Activated CD4-positive, alpha-beta memory T cell treated with anti-CD3 and anti-CD28 coated beads for 36 hours (primary cell): ENCODE measurements at regions of chr1 and their contacts with region 1.

Region 1: DNA sequence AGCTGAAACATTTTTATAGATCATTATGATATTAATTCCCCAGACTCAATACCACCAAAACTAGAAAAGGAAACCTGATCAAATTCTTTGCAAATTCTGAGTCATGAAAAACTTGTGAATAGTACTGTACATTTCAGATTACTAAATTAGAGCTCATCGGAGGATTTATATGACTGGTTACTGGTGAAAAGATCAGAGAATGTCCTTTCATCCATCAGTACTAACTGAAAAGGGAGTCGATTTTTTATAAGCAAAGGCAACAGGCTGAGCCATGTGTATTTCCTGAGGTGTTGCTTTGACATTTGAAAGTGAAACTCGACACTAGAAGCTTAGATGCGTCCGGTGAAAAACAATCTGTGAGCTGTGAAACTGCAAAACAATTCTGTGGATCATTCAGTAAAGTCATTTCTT is 155.7 kb downstream of the TNFSF18 start:
- DNase-seq: peak; percentile 29
- H3K4me3 Mint-ChIP-seq: peak overlapping the region; percentile 54
- H3K27ac Mint-ChIP-seq: peak overlapping the region; percentile 14
- H3K4me1 Mint-ChIP-seq: peaks cover 38% of the 10 kb centered on the region
- H3K27me3 Mint-ChIP-seq: peaks cover 18% of the 10 kb centered on the region

Region 2: DNA sequence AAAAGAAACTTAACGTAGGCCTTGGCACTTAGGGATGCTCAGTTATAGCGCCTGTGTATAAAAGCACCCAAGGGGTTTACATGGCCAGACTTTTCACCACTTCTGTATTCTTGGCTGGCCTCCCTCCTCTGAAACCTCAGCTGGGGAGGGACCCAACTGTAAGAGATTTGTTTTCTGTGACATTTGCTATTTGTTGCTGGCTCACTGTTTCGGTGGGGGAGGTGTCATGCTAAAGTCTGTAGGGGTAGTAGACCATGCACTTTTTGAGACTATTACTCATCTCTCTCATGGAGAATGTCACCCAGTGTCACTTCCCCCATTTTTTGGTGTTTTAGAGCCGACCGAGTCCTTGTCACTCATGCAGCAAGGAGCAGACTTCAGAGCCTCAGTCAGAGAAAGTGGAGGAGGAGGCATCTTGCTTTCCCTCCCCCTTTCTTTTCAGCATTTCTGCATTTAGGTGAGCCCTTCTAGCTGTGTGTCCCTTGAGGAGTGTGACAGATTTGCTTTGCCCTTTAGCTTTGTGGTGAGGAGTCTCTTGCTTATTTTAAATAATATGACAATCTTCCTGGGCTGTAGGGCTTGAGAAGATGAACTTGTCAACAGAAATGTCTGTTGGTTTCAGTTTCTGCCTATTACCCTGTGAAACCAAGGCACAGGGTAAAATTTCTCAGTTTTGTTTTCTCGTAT is 76.1 kb before region 1 on chr1:
- CTCF ChIA-PET with region 1: no interaction called
- POLR2A ChIA-PET with region 1: interaction called, 5 read pairs
- intact Hi-C with region 1: loop called (anchors 2 kb)
- DNase-seq: peak; percentile 69
- H3K4me3 Mint-ChIP-seq: peak overlapping the region; percentile 4
- H3K27ac Mint-ChIP-seq: peak overlapping the region; percentile 63
- H3K4me1 Mint-ChIP-seq: peaks cover 24% of the 10 kb centered on the region
- H3K27me3 Mint-ChIP-seq: peaks cover 11% of the 10 kb centered on the region

Region 3: GRCh38 chr1:172837816-172838680 is 57.0 kb before region 1 on chr1:
- CTCF ChIA-PET with region 1: interaction called, 6 read pairs
- POLR2A ChIA-PET with region 1: interaction called, 4 read pairs
- intact Hi-C with region 1: loop called (anchors 1 kb)
- DNase-seq: peak; percentile 15
- H3K4me3 Mint-ChIP-seq: no peak overlapping the region
- H3K27ac Mint-ChIP-seq: no peak overlapping the region
- H3K4me1 Mint-ChIP-seq: peaks cover 27% of the 10 kb centered on the region
- H3K27me3 Mint-ChIP-seq: peaks cover 33% of the 10 kb centered on the region

Region 4: DNA sequence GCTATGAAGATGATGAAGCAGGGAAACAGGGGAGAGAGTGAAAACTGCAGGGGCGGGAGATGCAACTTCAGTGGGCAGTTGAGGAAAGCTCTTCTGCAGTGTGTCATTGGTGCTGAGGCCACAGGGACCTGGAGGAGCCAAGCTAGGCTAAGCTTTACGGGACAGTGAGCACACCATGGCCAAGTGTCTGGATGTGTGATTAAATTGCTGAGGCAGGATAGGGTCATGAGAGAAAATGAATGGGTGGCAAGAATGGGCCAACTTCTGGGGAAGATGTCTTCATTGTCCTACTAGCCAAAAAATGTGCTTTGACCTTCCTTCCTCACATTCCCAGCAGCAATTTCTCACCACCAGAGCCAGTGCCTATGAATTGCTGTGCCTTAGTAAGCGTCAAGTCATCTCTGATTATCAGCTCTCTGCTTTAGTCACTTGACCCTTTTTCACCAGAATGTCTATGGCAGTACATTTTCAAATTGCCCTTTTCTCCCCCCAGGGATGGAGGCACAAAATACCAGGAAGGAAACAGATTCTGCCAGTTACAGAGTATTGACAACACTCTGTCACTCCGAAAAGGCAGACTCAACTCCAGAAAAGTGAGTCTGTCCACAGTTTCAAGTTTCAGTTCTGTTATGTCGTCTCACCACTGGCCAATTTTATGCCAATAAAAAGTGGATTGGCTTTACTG is 11.8 kb before region 1 on chr1:
- CTCF ChIA-PET with region 1: interaction called, 12 read pairs
- POLR2A ChIA-PET with region 1: interaction called, 5 read pairs
- intact Hi-C with region 1: loop called (anchors 1 kb)
- DNase-seq: peak; percentile 48
- H3K4me3 Mint-ChIP-seq: no peak overlapping the region
- H3K27ac Mint-ChIP-seq: no peak overlapping the region
- H3K4me1 Mint-ChIP-seq: peaks cover 15% of the 10 kb centered on the region
- H3K27me3 Mint-ChIP-seq: peaks cover 33% of the 10 kb centered on the region

Region 5: DNA sequence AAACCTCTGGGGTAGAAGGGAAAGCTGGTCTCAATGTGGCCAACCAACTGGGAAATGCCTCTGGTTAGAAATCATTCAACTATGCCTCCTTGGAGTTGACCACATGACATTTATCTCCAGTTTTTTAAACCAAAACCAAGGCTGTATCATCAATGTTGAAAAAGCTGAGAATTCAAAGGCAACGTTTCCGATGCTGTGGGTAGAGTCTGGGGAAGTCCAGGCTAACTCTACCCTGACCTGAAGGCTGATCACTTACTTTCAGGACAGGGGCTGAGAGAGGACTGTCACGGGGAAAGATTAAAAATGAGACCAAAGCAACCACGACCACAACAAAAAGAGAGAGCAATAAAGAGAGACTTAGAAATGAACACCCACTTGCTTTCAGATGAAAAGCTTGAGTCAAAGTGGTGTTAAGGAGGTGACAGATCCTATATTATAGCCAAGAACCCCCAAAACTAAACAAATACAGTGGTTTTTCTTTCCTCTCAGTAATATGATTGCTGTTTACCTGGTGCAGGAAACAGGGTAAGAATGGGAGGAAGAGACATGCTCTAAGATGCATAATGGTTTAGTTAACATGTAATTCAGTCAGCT is 402.8 kb after region 1 on chr1:
- CTCF ChIA-PET with region 1: no interaction called
- POLR2A ChIA-PET with region 1: interaction called, 3 read pairs
- intact Hi-C with region 1: loop called (anchors 1 kb)
- DNase-seq: peak; percentile 69
- H3K4me3 Mint-ChIP-seq: no peak overlapping the region
- H3K27ac Mint-ChIP-seq: no peak overlapping the region
- H3K4me1 Mint-ChIP-seq: peaks cover 39% of the 10 kb centered on the region
- H3K27me3 Mint-ChIP-seq: peaks cover 1% of the 10 kb centered on the region

Region 6: DNA sequence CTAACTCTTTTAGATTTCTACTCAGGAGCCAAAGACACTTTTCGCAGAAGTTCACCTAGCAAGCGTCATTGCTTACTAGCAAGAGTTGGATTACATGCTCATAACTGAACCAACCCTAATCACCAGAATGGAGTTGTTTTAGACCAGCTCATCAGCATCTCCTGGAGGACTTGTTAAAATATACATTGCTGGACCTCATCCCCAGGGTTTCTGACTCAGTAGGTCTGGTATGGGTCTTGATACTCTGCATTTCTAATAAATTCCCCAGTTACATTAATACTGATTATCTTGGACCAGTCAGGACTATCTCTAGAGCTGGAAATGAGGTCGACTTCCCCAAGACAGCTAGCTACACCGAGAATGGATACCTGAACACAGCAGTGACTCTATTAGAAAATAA is 572.4 kb after region 1 on chr1:
- CTCF ChIA-PET with region 1: no interaction called
- POLR2A ChIA-PET with region 1: no interaction called
- intact Hi-C with region 1: no loop called
- DNase-seq: no peak
- H3K4me3 Mint-ChIP-seq: no peak overlapping the region
- H3K27ac Mint-ChIP-seq: no peak overlapping the region
- H3K4me1 Mint-ChIP-seq: peaks cover 11% of the 10 kb centered on the region
- H3K27me3 Mint-ChIP-seq: no peaks in the 10 kb centered on the region